ENCODE measurements at regions of chr2 and their contacts with region 1.

Region 1: GRCh38 chr2:101983928-101984327 is 7.8 kb upstream of the IL1R2 start:
- DNase-seq: no peak
- ATAC-seq: peak in 3 of 4 donors; percentile 36 to 62 (median 59)
- H3K4me3 ChIP-seq: no peak overlapping the region
- H3K27ac ChIP-seq: no peak overlapping the region
- H3K4me1 ChIP-seq: peaks cover 0 to 6% (median 0%) of the 10 kb centered on the region in 12 donors
- H3K27me3 ChIP-seq: no peaks in the 10 kb centered on the region
- CTCF ChIP-seq: peak in 8 of 12 donors; percentile 8 to 44 (median 32)
- POLR2A ChIP-seq: no peak

Region 2: GRCh38 chr2:101883863-101884262 is 100.1 kb before region 1 on chr2:
- intact Hi-C with region 1: loop called in 1 of 10 experiments (anchors 10 kb)
- DNase-seq: no peak
- ATAC-seq: peak in 3 of 4 donors; percentile 65 to 79 (median 77)
- H3K4me3 ChIP-seq: no peak overlapping the region
- H3K27ac ChIP-seq: peak overlapping the region in 1 of 12 donors; percentile 25
- H3K4me1 ChIP-seq: peaks cover 0 to 35% (median 17%) of the 10 kb centered on the region in 12 donors
- H3K27me3 ChIP-seq: no peaks in the 10 kb centered on the region
- CTCF ChIP-seq: peak; percentile 33 to 68 (median 54)
- POLR2A ChIP-seq: no peak

Region 3: GRCh38 chr2:101893681-101894381 is 90.1 kb before region 1 on chr2:
- intact Hi-C with region 1: loop called in 3 of 10 experiments (anchors 10 kb)
- DNase-seq: no peak
- ATAC-seq: no peak
- H3K4me3 ChIP-seq: no peak overlapping the region
- H3K27ac ChIP-seq: no peak overlapping the region
- H3K4me1 ChIP-seq: peaks cover 0 to 13% (median 0%) of the 10 kb centered on the region in 12 donors
- H3K27me3 ChIP-seq: no peaks in the 10 kb centered on the region
- CTCF ChIP-seq: no peak
- POLR2A ChIP-seq: no peak

Region 4: GRCh38 chr2:101900375-101900774 is 83.6 kb before region 1 on chr2:
- intact Hi-C with region 1: loop called in 3 of 10 experiments (anchors 10 kb)
- DNase-seq: no peak
- ATAC-seq: no peak
- H3K4me3 ChIP-seq: no peak overlapping the region
- H3K27ac ChIP-seq: no peak overlapping the region
- H3K4me1 ChIP-seq: peaks cover 0 to 13% (median 0%) of the 10 kb centered on the region in 12 donors
- H3K27me3 ChIP-seq: no peaks in the 10 kb centered on the region
- CTCF ChIP-seq: no peak
- POLR2A ChIP-seq: no peak